Activated CD8-positive, alpha-beta T cell treated with anti-CD3 and anti-CD28 coated beads for 36 hours (primary cell): ENCODE measurements at regions of chr2 and their contacts with region 1.

Region 1: GRCh38 chr2:16608661-16609643 is 56.7 kb downstream of the CYRIA start:
- DNase-seq: peak; percentile 92
- ATAC-seq: peak; percentile 97
- H3K4me3 Mint-ChIP-seq: peak overlapping the region; percentile 75
- H3K27ac Mint-ChIP-seq: peak overlapping the region; percentile 69
- H3K4me1 Mint-ChIP-seq: peaks cover 3% of the 10 kb centered on the region
- H3K27me3 Mint-ChIP-seq: no peaks in the 10 kb centered on the region
- CTCF ChIP-seq: peak; percentile 92

Region 2: DNA sequence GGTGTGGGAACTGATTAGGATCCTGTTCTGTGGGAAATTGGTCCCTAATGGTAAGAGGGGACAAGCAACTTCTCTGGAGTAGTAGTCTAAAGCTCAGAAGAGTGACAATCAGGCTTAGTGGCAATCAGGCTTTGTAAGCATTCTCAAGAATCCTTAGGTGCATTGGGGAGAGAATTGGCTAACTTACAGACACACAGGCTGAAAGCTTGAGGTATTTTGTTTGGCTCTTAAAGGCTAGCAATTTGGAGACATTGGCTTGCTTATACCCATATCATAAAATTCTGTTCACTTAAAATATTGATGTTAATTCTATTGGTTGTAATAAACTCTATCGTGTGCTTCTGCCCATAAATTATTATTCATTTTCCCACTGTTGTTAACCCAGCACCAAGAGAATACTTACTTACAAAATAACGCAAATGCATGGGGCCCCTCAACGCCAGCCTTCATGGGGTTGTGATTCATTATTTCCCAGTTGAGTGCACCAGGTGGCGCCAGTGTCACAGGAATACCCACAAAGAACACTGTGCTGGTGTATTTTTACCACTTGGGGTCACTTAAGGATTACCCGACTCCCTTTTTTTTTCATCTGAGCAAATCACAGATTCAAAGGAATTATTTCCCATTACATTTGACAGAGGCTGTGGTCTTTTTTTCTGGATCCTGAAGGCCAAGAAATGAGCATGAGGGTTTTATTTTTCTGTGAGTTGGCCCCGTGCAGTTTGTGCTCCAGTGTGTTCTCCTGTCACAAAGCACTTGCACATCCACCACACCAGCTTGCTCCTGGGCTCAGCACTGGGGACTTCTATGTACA is 971.8 kb before region 1 on chr2:
- CTCF ChIA-PET with region 1: interaction called, 5 read pairs
- POLR2A ChIA-PET with region 1: no interaction called
- intact Hi-C with region 1: loop called (anchors 2 kb)
- DNase-seq: peak; percentile 82
- ATAC-seq: peak; percentile 83
- H3K4me3 Mint-ChIP-seq: no peak overlapping the region
- H3K27ac Mint-ChIP-seq: no peak overlapping the region
- H3K4me1 Mint-ChIP-seq: peaks cover 2% of the 10 kb centered on the region
- H3K27me3 Mint-ChIP-seq: no peaks in the 10 kb centered on the region
- CTCF ChIP-seq: peak; percentile 95

Region 3: GRCh38 chr2:15939854-15940660 is 668.9 kb before region 1 on chr2 and contains the start of gene MYCN:
- CTCF ChIA-PET with region 1: interaction called, 15 read pairs
- POLR2A ChIA-PET with region 1: no interaction called
- intact Hi-C with region 1: loop called (anchors 5 kb)
- DNase-seq: peak; percentile 67
- ATAC-seq: peak; percentile 57
- H3K4me3 Mint-ChIP-seq: peak within 1 kb of the TSS; percentile 56
- H3K27ac Mint-ChIP-seq: no peak within 1 kb of the TSS
- H3K4me1 Mint-ChIP-seq: peaks cover 21% of the 10 kb centered on the region
- H3K27me3 Mint-ChIP-seq: peaks cover 51% of the 10 kb centered on the region
- CTCF ChIP-seq: no peak
- total RNA-seq, gene MYCN: 0.16 to 0.22 TPM

Region 4: DNA sequence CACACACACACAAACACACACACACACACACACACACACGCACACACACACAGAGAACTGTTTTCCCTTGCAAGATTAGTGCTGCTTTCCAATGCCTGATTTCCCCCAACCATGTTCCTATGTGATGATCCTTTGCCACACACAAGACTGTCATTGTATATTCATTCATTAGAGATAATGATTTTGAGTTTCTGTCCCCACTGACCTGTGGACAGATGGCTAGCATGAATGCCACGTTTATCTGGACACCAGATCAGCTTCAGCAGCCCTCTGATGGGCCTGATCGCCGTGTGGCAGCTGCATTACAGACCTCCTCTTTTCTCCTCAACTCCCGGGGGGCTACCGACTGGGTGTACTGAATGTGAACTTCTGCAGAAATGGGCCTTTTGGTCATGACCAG is 315.6 kb before region 1 on chr2:
- CTCF ChIA-PET with region 1: no interaction called
- POLR2A ChIA-PET with region 1: no interaction called
- intact Hi-C with region 1: no loop called
- DNase-seq: no peak
- ATAC-seq: no peak
- H3K4me3 Mint-ChIP-seq: no peak overlapping the region
- H3K27ac Mint-ChIP-seq: no peak overlapping the region
- H3K4me1 Mint-ChIP-seq: no peaks in the 10 kb centered on the region
- H3K27me3 Mint-ChIP-seq: peaks cover 3% of the 10 kb centered on the region
- CTCF ChIP-seq: no peak

Region 5: DNA sequence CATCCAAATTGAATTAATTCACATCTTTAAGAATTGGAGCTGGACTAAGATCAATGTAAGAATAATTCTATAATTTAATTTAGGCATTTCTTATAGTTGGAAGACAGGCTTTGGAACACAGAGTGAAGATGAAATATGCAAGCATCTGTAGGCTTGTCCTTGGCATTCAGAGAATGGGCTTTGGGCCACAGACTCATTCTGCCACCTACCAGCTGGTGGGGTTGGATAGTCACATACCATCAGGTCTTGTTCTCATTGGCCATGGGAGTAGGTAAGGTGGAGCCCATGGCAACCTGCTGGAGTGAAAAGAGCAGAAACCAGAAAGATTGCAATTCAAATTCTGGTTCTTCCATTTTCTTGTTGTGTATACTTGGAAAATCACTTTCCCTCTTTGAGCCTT is 243.6 kb before region 1 on chr2:
- CTCF ChIA-PET with region 1: no interaction called
- POLR2A ChIA-PET with region 1: no interaction called
- intact Hi-C with region 1: no loop called
- DNase-seq: no peak
- ATAC-seq: no peak
- H3K4me3 Mint-ChIP-seq: no peak overlapping the region
- H3K27ac Mint-ChIP-seq: no peak overlapping the region
- H3K4me1 Mint-ChIP-seq: no peaks in the 10 kb centered on the region
- H3K27me3 Mint-ChIP-seq: no peaks in the 10 kb centered on the region
- CTCF ChIP-seq: no peak

Region 6: GRCh38 chr2:16525265-16525887 is 83.6 kb before region 1 on chr2:
- CTCF ChIA-PET with region 1: interaction called, 8 read pairs
- POLR2A ChIA-PET with region 1: no interaction called
- intact Hi-C with region 1: loop called (anchors 10 kb)
- DNase-seq: peak; percentile 38
- ATAC-seq: no peak
- H3K4me3 Mint-ChIP-seq: no peak overlapping the region
- H3K27ac Mint-ChIP-seq: no peak overlapping the region
- H3K4me1 Mint-ChIP-seq: no peaks in the 10 kb centered on the region
- H3K27me3 Mint-ChIP-seq: peaks cover 6% of the 10 kb centered on the region
- CTCF ChIP-seq: peak; percentile 67

Region 7: GRCh38 chr2:16553226-16553625 is 55.7 kb before region 1 on chr2:
- CTCF ChIA-PET with region 1: interaction called, 8 read pairs
- POLR2A ChIA-PET with region 1: no interaction called
- intact Hi-C with region 1: loop called (anchors 5 kb)
- DNase-seq: peak; percentile 35
- ATAC-seq: no peak
- H3K4me3 Mint-ChIP-seq: no peak overlapping the region
- H3K27ac Mint-ChIP-seq: no peak overlapping the region
- H3K4me1 Mint-ChIP-seq: no peaks in the 10 kb centered on the region
- H3K27me3 Mint-ChIP-seq: peaks cover 3% of the 10 kb centered on the region
- CTCF ChIP-seq: peak; percentile 68

Region 8: DNA sequence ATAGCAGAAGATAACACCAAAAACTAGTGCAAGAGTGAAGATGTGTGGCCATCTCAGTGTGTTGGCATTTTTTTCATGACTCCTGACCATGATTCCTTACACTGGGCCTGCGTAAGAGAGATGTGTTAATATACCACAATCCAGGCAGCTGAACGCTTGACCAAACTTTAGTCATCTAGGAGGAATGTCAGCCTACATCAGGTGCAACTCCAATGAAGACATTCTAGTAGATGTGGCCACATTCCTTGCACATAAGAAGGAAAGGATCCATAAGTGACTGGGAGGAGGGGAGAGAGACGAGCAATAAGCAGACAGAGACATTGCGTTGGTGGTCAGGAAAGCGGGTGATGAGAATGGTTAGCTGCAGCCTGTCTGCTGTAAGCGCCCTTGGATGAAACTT is 14.1 kb after region 1 on chr2:
- CTCF ChIA-PET with region 1: interaction called, 29 read pairs
- POLR2A ChIA-PET with region 1: no interaction called
- intact Hi-C with region 1: no loop called
- DNase-seq: no peak
- ATAC-seq: no peak
- H3K4me3 Mint-ChIP-seq: no peak overlapping the region
- H3K27ac Mint-ChIP-seq: no peak overlapping the region
- H3K4me1 Mint-ChIP-seq: peaks cover 12% of the 10 kb centered on the region
- H3K27me3 Mint-ChIP-seq: peaks cover 1% of the 10 kb centered on the region
- CTCF ChIP-seq: no peak

Region 9: DNA sequence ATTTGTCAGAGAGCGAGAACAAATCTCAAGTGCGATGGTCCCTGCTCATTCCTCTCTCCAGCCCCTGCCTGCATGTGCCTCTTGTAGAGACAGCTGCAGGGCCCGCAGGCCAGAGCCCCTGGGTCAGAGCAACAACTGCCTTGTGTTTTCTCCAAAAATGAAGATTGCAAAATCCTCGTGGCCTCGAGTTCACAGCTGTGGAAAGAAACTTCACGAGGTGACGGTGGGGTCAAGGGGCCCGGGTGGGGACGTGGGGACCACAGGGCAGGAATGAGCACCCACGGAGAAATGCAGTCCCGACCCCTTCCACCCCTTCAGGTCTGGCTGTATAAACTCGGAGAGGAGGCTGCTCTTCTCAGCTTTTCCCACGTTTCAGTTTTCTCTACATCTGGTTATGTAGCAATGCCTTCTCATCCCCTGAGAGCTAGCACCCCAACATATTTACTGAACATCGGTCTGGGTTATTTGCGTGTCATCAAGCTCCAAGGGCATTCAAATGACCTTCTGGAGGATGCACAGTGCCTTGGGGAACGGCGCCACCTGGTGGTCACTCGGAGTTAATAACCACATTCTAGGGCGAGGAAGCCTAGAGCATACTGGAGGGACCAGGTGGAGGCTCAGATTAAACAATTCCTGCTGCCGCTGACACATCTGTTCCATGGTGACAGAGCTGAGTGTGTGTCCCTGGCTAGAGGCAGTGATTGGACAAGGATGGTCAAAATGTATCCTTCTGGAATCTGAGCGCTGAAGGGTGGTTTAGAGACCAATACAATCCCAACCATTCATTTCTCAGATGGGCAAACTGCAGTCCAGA is 148.1 kb after region 1 on chr2:
- CTCF ChIA-PET with region 1: interaction called, 41 read pairs
- POLR2A ChIA-PET with region 1: no interaction called
- intact Hi-C with region 1: no loop called
- DNase-seq: peak; percentile 71
- ATAC-seq: peak; percentile 85
- H3K4me3 Mint-ChIP-seq: no peak overlapping the region
- H3K27ac Mint-ChIP-seq: no peak overlapping the region
- H3K4me1 Mint-ChIP-seq: no peaks in the 10 kb centered on the region
- H3K27me3 Mint-ChIP-seq: no peaks in the 10 kb centered on the region
- CTCF ChIP-seq: peak; percentile 88